ENCODE measurements at regions of chr1 and their contacts with region 1.

Region 1: DNA sequence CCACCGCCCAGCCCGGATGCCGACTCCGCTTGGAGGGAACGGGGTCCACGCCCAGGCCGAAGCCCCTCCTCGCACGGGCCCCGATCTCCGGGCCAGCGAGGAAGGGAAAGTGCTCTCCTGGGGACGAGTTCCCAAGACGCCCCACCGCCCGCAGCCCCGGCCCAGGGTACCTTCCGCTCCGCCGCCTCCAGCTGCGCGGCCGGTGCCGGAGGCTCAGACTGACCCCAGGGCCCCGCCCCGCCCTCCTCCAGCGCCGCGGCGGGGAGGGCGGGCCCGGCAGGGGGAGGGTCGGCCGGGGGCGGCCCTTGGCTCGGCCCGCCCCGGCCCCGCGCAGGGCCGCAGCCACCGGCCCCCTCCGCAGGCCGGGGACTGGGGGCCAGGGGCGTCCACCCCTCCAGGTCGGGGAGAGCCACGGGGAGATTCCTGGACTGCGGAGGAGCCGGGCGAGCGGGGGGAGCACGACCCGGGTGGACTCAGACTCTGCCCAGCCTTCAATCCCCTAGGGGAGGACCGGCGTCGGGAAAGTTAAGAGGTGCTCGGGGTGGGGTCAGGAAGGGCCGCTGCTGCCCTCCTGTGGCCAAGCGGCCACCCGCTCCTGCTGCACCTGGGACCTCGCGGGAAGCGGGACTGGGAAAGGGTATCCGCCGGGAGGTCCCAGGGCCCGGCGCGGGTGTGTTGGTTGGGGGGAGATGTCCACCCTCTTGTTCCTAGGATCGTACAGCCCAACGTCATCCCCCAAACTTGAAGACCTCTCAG is at the start of gene RHOC:
- DNase-seq: peak; percentile 93
- ATAC-seq: peak; percentile 90
- total RNA-seq, gene RHOC: 118 TPM

Region 2: GRCh38 chr1:112390775-112391602 is 316.1 kb before region 1 on chr1:
- intact Hi-C with region 1: loop called (anchors 1 kb)
- DNase-seq: peak; percentile 81
- ATAC-seq: peak; percentile 90

Region 3: GRCh38 chr1:112501810-112502641 is 205.1 kb before region 1 on chr1:
- intact Hi-C with region 1: loop called (anchors 5 kb)
- DNase-seq: peak; percentile 81
- ATAC-seq: peak; percentile 91

Region 4: GRCh38 chr1:112515311-112516009 is 191.6 kb before region 1 on chr1:
- intact Hi-C with region 1: loop called (anchors 5 kb)
- DNase-seq: no peak
- ATAC-seq: no peak

Region 5: GRCh38 chr1:112619520-112620376 is 87.3 kb before region 1 on chr1 and contains the start of gene CAPZA1:
- intact Hi-C with region 1: loop called (anchors 1 kb)
- DNase-seq: peak; percentile 96
- ATAC-seq: peak; percentile 99
- total RNA-seq, gene CAPZA1: 30.5 TPM

Region 6: DNA sequence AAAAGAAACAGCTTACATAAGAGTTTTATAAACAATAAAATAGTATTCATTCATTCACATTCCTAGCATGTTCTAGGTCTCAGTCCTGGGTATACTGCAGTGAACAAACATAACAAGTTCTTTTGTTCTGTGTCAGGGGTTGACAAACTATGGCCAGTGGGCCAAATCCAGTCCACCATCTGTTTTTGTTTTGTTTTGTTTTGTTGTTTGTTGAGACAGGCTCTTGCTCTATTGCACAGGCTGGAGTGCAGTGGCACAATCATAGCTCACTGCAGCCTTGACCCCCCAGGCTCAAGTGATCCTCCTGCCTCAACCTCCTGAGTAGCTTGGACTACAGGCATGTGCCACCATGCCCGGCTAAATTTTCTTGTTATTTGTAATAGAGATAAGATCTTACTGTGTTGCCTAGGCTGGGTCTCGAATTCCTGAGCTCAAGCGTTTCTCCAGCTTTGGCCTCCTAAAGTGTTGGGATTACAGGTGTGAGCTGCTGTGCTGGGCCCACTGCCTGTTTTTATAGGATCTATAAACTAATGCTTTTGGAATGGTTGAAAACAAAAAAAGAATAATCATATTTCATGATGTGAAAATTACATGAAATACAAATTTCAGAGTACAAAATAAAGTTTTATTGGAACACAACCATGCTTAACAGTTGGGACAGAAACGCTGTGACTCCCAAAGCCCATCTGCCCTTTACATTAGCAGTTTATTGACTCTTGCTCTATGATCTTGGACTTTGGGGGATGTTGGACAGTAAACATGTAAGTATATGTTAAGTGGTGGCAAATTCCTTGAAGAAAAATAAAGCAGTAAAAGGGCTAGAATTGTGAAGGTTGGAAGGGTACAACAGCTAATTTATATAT is 69.6 kb before region 1 on chr1:
- intact Hi-C with region 1: no loop called
- DNase-seq: no peak
- ATAC-seq: no peak

Region 7: GRCh38 chr1:112778137-112778536 is 71.1 kb after region 1 on chr1:
- intact Hi-C with region 1: no loop called
- DNase-seq: no peak
- ATAC-seq: no peak

Measured in Right ventricle myocardium inferior (tissue), 1 donor.